ENCODE measurements at regions of chr14 and their contacts with region 1.

Region 1: GRCh38 chr14:50619556-50620141 is 48.5 kb downstream of the SAV1 start:
- DNase-seq: no peak
- CTCF ChIP-seq: peak; percentile 66

Region 2: DNA sequence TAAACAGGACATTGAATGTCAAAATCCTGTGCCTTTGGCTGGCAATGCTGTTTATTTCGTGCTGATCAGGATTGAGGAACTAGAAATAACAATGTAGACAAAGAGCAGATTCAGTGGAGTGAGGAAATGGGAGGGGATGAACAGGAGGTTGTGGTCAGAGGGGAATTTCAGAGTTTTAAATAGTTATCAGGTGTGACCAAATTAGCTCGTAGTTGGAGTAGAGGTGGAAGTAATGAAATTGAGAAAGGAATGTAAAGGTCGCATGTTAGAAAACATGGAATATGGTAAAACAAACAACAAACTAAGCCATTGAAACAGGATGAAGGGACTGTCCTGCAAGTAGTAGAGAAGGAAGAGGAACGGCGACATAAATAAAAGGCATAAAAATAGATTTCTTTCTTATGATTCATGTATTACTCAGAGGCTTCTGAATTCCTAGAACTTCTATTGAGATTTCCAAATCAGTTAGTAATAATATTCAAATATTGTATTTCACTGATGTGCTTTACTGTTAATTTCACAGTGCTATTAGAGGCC is 57.9 kb after region 1 on chr14:
- in situ Hi-C with region 1: no loop called
- DNase-seq: peak; percentile 29
- CTCF ChIP-seq: no peak

Region 3: GRCh38 chr14:50714450-50715073 is 94.9 kb after region 1 on chr14:
- in situ Hi-C with region 1: loop called (anchors 25 kb)
- DNase-seq: peak; percentile 69
- CTCF ChIP-seq: peak; percentile 71

Measured in GM13977 (cell line).